ENCODE measurements at regions of chr4 and their contacts with region 1.

Region 1: GRCh38 chr4:117831060-117831683 is 203.1 kb upstream of the NDST3 start:
- DNase-seq: no peak
- ATAC-seq: no peak
- H3K4me3 ChIP-seq: no peak overlapping the region
- H3K4me3 Mint-ChIP-seq: no peak overlapping the region
- H3K27ac ChIP-seq: no peak overlapping the region
- H3K27ac Mint-ChIP-seq: no peak overlapping the region
- H3K4me1 ChIP-seq: no peaks in the 10 kb centered on the region
- H3K4me1 Mint-ChIP-seq: no peaks in the 10 kb centered on the region
- H3K27me3 ChIP-seq: no peaks in the 10 kb centered on the region
- H3K27me3 Mint-ChIP-seq: no peaks in the 10 kb centered on the region
- CTCF ChIP-seq: no peak

Region 2: DNA sequence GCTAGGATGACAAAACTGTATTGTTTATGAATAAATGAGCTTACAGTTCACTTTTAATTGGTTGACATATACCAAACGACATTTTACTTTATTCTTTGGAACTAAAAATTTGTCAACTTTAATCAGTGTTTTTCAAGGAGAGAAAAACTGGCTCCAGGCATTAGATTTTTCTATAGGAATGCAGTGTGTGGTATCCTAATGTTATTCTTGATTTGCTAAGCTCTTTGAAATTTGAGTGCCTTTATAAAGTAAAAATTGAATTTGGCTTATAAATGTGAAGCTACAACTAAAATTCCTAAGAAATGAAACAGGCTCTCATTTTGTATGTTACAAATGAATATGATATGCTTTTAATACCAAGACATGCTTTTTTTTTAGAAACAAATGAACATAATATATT is 303.6 kb before region 1 on chr4:
- CTCF ChIA-PET with region 1: no interaction called
- POLR2A ChIA-PET with region 1: no interaction called
- intact Hi-C with region 1: no loop called
- DNase-seq: no peak
- ATAC-seq: no peak
- H3K4me3 ChIP-seq: no peak overlapping the region
- H3K4me3 Mint-ChIP-seq: no peak overlapping the region
- H3K27ac ChIP-seq: no peak overlapping the region
- H3K27ac Mint-ChIP-seq: no peak overlapping the region
- H3K4me1 ChIP-seq: no peaks in the 10 kb centered on the region
- H3K4me1 Mint-ChIP-seq: no peaks in the 10 kb centered on the region
- H3K27me3 ChIP-seq: no peaks in the 10 kb centered on the region
- H3K27me3 Mint-ChIP-seq: no peaks in the 10 kb centered on the region
- CTCF ChIP-seq: no peak

Region 3: DNA sequence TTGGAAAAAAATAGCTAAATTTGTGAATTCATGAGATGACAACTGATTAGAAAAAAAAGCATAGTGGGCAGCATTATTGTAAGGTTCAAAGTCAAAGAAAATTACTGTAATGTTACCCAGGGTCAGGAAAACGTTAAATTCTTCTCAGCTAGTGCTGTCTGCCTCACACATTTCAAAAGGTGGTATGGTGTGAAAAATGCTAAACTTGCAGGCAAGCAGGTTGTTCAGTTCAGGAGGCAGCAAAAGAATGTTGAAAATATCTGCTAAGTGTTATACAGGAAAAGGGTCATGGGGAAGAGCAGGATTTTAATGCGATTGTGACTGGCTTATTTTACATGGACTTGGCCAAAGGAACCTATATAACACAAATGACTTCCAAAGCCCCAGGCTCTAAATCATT is 29.4 kb before region 1 on chr4:
- CTCF ChIA-PET with region 1: no interaction called
- POLR2A ChIA-PET with region 1: no interaction called
- intact Hi-C with region 1: loop called in 1 of 2 experiments (anchors 1 kb)
- DNase-seq: no peak
- ATAC-seq: no peak
- H3K4me3 ChIP-seq: no peak overlapping the region
- H3K4me3 Mint-ChIP-seq: no peak overlapping the region
- H3K27ac ChIP-seq: no peak overlapping the region
- H3K27ac Mint-ChIP-seq: no peak overlapping the region
- H3K4me1 ChIP-seq: no peaks in the 10 kb centered on the region
- H3K4me1 Mint-ChIP-seq: no peaks in the 10 kb centered on the region
- H3K27me3 ChIP-seq: no peaks in the 10 kb centered on the region
- H3K27me3 Mint-ChIP-seq: no peaks in the 10 kb centered on the region
- CTCF ChIP-seq: no peak